ENCODE measurements at regions of chr6 and their contacts with region 1.

Region 1: GRCh38 chr6:55886185-55886836 is 10.9 kb upstream of the BMP5 start:
- DNase-seq: peak; percentile 34
- H3K4me3 Mint-ChIP-seq: no peak overlapping the region
- H3K27ac Mint-ChIP-seq: no peak overlapping the region
- H3K4me1 Mint-ChIP-seq: peaks cover 18% of the 10 kb centered on the region
- H3K27me3 Mint-ChIP-seq: no peaks in the 10 kb centered on the region
- CTCF ChIP-seq: peak; percentile 50

Region 2: GRCh38 chr6:55445648-55446204 is 440.6 kb before region 1 on chr6:
- CTCF ChIA-PET with region 1: interaction called, 77 read pairs
- POLR2A ChIA-PET with region 1: interaction called, 4 read pairs
- intact Hi-C with region 1: loop called (anchors 1 kb)
- DNase-seq: peak; percentile 50
- H3K4me3 Mint-ChIP-seq: no peak overlapping the region
- H3K27ac Mint-ChIP-seq: no peak overlapping the region
- H3K4me1 Mint-ChIP-seq: peaks cover 9% of the 10 kb centered on the region
- H3K27me3 Mint-ChIP-seq: no peaks in the 10 kb centered on the region
- CTCF ChIP-seq: peak; percentile 68

Region 3: DNA sequence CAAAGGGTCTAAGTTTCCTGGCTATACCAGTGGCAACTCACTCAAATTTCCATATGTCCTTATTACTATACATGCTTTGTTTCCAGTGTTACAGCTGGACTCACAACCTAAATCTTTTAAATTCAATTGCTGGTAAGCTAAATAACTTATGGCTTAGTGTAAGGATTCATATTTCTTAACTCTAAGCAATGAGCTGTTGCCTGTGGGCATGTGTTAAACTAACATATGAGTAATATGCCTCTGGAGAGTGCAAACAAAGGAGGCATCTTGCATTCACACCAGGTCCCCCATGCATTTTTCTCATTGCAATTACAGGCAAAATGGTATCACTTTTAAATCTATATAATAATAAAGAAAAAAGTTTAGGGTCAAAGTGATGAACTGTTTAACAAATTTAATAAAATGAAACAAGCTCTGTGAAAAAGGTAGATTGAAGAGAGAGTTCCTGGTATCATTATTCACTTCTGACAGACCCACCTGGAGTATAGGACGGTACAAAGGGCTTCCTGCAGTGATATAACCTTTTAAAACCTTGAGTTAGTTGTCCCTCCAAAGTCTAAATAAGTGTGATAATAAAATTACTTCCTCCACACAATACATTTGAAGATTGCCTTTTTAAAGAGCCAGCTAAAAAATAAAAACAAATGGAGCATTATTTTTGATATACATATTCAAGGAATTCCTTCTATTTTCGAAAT is 249.8 kb before region 1 on chr6:
- CTCF ChIA-PET with region 1: interaction called, 5 read pairs
- POLR2A ChIA-PET with region 1: interaction called, 3 read pairs
- intact Hi-C with region 1: loop called (anchors 5 kb)
- DNase-seq: peak; percentile 78
- H3K4me3 Mint-ChIP-seq: no peak overlapping the region
- H3K27ac Mint-ChIP-seq: peak overlapping the region; percentile 33
- H3K4me1 Mint-ChIP-seq: peaks cover 20% of the 10 kb centered on the region
- H3K27me3 Mint-ChIP-seq: no peaks in the 10 kb centered on the region
- CTCF ChIP-seq: no peak

Region 4: GRCh38 chr6:55868771-55869479 is 17.4 kb before region 1 on chr6:
- CTCF ChIA-PET with region 1: no interaction called
- POLR2A ChIA-PET with region 1: interaction called, 12 read pairs
- intact Hi-C with region 1: no loop called
- DNase-seq: peak; percentile 9
- H3K4me3 Mint-ChIP-seq: no peak overlapping the region
- H3K27ac Mint-ChIP-seq: peak overlapping the region; percentile 73
- H3K4me1 Mint-ChIP-seq: peaks cover 40% of the 10 kb centered on the region
- H3K27me3 Mint-ChIP-seq: no peaks in the 10 kb centered on the region
- CTCF ChIP-seq: no peak

Region 5: DNA sequence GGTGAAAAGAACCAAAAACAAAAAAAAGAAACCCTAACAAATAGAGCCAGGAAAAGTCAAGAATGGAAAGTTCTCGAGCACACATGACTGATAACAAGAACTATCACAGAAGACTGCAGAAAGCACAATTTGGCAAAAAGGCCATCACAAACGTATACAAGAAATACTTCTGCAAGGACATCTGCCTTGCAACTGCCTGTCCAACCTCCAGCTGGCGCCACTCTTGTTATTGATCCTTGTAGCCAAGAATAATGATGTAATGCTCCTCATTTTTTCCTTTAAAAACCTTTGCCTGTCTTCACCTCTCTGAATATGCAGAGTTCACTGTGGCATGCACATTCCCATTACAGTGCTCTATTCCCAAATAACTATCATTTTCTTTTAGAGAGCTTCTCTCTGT is 77.0 kb after region 1 on chr6:
- CTCF ChIA-PET with region 1: no interaction called
- POLR2A ChIA-PET with region 1: no interaction called
- intact Hi-C with region 1: no loop called
- DNase-seq: peak; percentile 14
- H3K4me3 Mint-ChIP-seq: no peak overlapping the region
- H3K27ac Mint-ChIP-seq: no peak overlapping the region
- H3K4me1 Mint-ChIP-seq: no peaks in the 10 kb centered on the region
- H3K27me3 Mint-ChIP-seq: no peaks in the 10 kb centered on the region
- CTCF ChIP-seq: no peak

Measured in MCF 10A (cell line).